CD8-positive, alpha-beta T cell (primary cell): ENCODE measurements at regions of chr16 and their contacts with region 1.

Region 1: DNA sequence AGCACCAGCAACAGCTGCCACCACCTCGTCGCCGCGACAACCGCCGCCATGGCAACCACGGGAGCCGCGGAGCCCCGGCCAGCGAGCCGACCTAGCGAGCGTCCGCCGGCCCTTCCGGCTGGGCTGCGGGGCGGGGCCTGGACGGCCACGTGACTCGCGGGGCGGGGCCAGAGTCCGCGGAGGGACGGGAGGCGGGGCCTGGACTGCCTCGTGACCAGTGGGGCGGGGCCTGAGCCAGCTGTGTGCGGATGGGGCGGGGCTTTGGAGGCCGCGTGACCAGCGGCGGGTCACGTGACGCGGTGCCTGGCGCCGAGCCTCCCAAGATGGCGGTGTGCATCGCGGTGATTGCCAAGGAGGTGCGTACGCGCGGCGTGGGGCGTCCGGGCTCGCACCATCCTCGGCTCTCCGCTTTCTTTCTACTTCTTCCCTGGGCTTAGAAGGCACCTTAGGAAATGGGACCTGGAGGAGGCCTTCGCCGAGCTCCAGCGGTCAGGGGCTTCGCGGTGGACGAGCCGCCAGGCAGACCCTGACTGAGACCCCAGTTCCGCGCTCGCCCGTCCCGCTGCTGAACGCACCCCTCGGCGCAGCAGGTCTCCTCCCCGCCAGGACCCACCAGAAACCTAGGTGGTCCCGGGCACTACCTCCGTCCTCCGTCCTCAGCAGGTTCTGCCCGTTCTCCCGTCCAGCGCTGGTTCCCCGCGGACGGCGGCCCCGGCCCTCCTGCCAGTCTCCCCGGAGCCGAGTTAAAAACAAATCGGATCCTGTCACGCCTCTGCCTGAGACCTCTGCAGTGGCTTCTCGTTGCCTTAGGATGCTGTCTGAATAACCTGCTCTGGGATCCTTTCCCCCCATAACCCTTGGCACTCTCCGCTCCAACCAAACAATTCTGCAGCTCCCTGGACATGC is at the starts of genes GALNS and TRAPPC2L:
- DNase-seq: peak; percentile 97 to 100 (median 99)
- ATAC-seq: peak; percentile 88
- H3K4me3 ChIP-seq: peak within 1 kb of the TSS; percentile 91 to 97
- H3K4me3 Mint-ChIP-seq: peak within 1 kb of the TSS; percentile 98
- H3K27ac ChIP-seq: peak within 1 kb of the TSS; percentile 74 to 83
- H3K27ac Mint-ChIP-seq: peak within 1 kb of the TSS; percentile 92
- H3K4me1 ChIP-seq: peaks cover 33% of the 10 kb centered on the region
- H3K4me1 Mint-ChIP-seq: peaks cover 39% of the 10 kb centered on the region
- H3K27me3 ChIP-seq: no peaks in the 10 kb centered on the region
- H3K27me3 Mint-ChIP-seq: no peaks in the 10 kb centered on the region
- CTCF ChIP-seq: no peak
- total RNA-seq, gene GALNS: 16.0 to 20.0 TPM
- total RNA-seq, gene TRAPPC2L: 53.4 to 56.5 TPM

Region 2: GRCh38 chr16:88569985-88570690 is 286.9 kb before region 1 on chr16 and contains the start of gene ZC3H18:
- CTCF ChIA-PET with region 1: no interaction called
- POLR2A ChIA-PET with region 1: interaction called, 8 read pairs
- intact Hi-C with region 1: loop called in 1 of 2 experiments (anchors 2 kb)
- DNase-seq: peak; percentile 96 to 100 (median 99)
- ATAC-seq: peak; percentile 95
- H3K4me3 ChIP-seq: peak within 1 kb of the TSS; percentile 67 to 76
- H3K4me3 Mint-ChIP-seq: peak within 1 kb of the TSS; percentile 87
- H3K27ac ChIP-seq: peak within 1 kb of the TSS; percentile 55 to 85
- H3K27ac Mint-ChIP-seq: peak within 1 kb of the TSS; percentile 91
- H3K4me1 ChIP-seq: peaks cover 20% of the 10 kb centered on the region
- H3K4me1 Mint-ChIP-seq: peaks cover 34% of the 10 kb centered on the region
- H3K27me3 ChIP-seq: no peaks in the 10 kb centered on the region
- H3K27me3 Mint-ChIP-seq: no peaks in the 10 kb centered on the region
- CTCF ChIP-seq: no peak
- total RNA-seq, gene ZC3H18: 140 to 149 TPM

Region 3: DNA sequence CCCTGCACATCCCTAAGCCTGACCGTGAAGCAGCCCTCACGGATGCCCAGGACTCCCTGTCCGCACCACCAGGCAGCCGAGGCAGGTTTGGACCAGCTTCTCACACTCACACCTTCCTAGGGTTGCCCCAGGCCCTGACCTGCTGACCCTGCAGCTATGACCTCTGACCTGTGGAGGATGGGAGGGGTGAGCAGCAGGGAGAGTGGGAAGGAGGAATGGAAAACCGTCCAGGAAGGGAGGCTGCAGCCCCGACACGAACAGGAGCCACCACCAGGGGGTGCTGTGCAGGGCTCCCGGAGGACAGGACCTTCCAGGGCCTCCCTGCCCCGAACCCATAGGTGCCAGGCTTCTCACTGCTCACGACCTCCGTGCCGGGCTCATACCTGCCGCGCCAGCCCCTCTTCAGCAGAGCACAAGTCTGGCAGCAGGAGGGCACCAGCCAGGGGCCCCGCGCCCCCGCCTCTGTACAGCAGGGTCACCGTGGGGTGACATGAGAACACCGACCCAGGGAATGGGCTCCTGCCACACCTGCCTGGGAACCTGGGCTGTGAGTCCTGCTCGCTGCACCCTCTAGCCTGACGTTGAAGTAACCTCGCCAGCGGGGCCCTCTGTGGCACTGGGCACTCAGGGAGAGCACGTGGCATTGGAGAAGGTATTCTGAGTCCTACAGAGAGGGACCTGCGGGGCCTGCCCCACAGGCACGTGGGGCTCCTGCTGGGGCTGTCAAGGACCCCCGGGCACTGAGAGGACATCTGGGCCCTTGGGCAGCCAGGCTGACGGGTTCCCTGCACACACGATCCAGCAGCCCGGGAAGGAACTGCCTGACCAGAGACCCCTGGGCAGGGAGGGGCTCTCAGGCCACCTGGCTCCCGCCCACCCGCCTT is 113.1 kb before region 1 on chr16:
- CTCF ChIA-PET with region 1: interaction called, 15 read pairs
- POLR2A ChIA-PET with region 1: interaction called, 6 read pairs
- intact Hi-C with region 1: loop called in 1 of 2 experiments (anchors 1 kb)
- DNase-seq: peak; percentile 43 to 88 (median 77)
- ATAC-seq: peak; percentile 64
- H3K4me3 ChIP-seq: no peak overlapping the region
- H3K4me3 Mint-ChIP-seq: no peak overlapping the region
- H3K27ac ChIP-seq: no peak overlapping the region
- H3K27ac Mint-ChIP-seq: no peak overlapping the region
- H3K4me1 ChIP-seq: peaks cover 33% of the 10 kb centered on the region
- H3K4me1 Mint-ChIP-seq: peaks cover 25% of the 10 kb centered on the region
- H3K27me3 ChIP-seq: no peaks in the 10 kb centered on the region
- H3K27me3 Mint-ChIP-seq: no peaks in the 10 kb centered on the region
- CTCF ChIP-seq: peak; percentile 89

Region 4: GRCh38 chr16:88811769-88812512 is 45.1 kb before region 1 on chr16 and contains the start of gene APRT:
- CTCF ChIA-PET with region 1: interaction called, 21 read pairs
- POLR2A ChIA-PET with region 1: interaction called, 35 read pairs
- intact Hi-C with region 1: loop called (anchors 1 kb)
- DNase-seq: peak; percentile 93 to 99 (median 97)
- ATAC-seq: peak; percentile 90
- H3K4me3 ChIP-seq: peak within 1 kb of the TSS; percentile 75 to 99
- H3K4me3 Mint-ChIP-seq: peak within 1 kb of the TSS; percentile 97
- H3K27ac ChIP-seq: peak within 1 kb of the TSS; percentile 71 to 87
- H3K27ac Mint-ChIP-seq: peak within 1 kb of the TSS; percentile 97
- H3K4me1 ChIP-seq: peaks cover 21% of the 10 kb centered on the region
- H3K4me1 Mint-ChIP-seq: peaks cover 19% of the 10 kb centered on the region
- H3K27me3 ChIP-seq: no peaks in the 10 kb centered on the region
- H3K27me3 Mint-ChIP-seq: no peaks in the 10 kb centered on the region
- CTCF ChIP-seq: no peak
- total RNA-seq, gene APRT: 171 to 178 TPM

Region 5: DNA sequence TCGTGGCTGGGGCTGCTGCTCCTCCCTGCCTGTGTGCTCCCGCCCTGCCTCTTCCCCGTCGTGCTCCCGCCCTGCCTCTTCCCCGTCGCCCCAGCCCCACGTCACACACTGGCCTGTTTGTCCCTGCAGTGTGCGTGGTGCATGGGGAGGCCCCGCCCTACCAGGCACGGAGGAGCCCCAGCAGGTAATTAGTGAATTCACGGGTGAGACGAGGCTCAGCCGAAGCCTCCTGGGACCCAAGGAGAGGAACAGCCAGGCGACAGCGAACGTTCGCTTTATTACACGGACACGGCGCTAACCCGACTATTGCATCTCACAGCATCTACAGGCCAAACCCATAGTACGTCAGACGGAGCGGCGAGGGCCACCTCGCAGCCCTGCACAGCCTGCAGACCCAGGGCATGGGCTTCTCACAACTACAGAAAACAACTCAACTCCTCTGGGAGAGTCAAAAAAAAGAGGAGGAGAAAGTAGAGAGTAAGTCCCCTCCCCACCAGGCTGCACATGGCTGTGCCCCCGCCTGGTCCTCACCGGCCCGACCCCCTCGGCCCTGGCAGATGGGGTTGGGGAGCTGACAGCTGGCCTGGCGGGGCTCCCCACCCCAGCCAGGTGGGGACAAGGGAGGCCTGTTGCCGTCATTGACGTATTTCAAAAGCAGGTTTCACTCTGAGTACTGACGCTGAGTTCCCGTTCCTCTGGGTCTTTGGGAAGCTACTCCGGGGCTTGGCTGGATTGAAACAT is 13.7 kb after region 1 on chr16:
- CTCF ChIA-PET with region 1: no interaction called
- POLR2A ChIA-PET with region 1: no interaction called
- intact Hi-C with region 1: no loop called
- DNase-seq: no peak
- ATAC-seq: peak; percentile 49
- H3K4me3 ChIP-seq: no peak overlapping the region
- H3K4me3 Mint-ChIP-seq: peak overlapping the region; percentile 32
- H3K27ac ChIP-seq: no peak overlapping the region
- H3K27ac Mint-ChIP-seq: no peak overlapping the region
- H3K4me1 ChIP-seq: no peaks in the 10 kb centered on the region
- H3K4me1 Mint-ChIP-seq: peaks cover 6% of the 10 kb centered on the region
- H3K27me3 ChIP-seq: peaks cover 6% of the 10 kb centered on the region in 2 experiments
- H3K27me3 Mint-ChIP-seq: peaks cover 8% of the 10 kb centered on the region
- CTCF ChIP-seq: no peak

Region 6: GRCh38 chr16:88896238-88897070 is 39.4 kb after region 1 on chr16:
- CTCF ChIA-PET with region 1: no interaction called
- POLR2A ChIA-PET with region 1: no interaction called
- intact Hi-C with region 1: no loop called
- DNase-seq: no peak
- ATAC-seq: no peak
- H3K4me3 ChIP-seq: no peak overlapping the region
- H3K4me3 Mint-ChIP-seq: no peak overlapping the region
- H3K27ac ChIP-seq: no peak overlapping the region
- H3K27ac Mint-ChIP-seq: no peak overlapping the region
- H3K4me1 ChIP-seq: no peaks in the 10 kb centered on the region
- H3K4me1 Mint-ChIP-seq: no peaks in the 10 kb centered on the region
- H3K27me3 ChIP-seq: no peaks in the 10 kb centered on the region
- H3K27me3 Mint-ChIP-seq: no peaks in the 10 kb centered on the region
- CTCF ChIP-seq: no peak

Region 7: GRCh38 chr16:89193021-89193575 is 336.0 kb after region 1 on chr16:
- CTCF ChIA-PET with region 1: no interaction called
- POLR2A ChIA-PET with region 1: no interaction called
- intact Hi-C with region 1: loop called in 1 of 2 experiments (anchors 2 kb)
- DNase-seq: peak in 3 of 9 experiments; percentile 62 to 76 (median 64)
- ATAC-seq: no peak
- H3K4me3 ChIP-seq: no peak overlapping the region
- H3K4me3 Mint-ChIP-seq: no peak overlapping the region
- H3K27ac ChIP-seq: no peak overlapping the region
- H3K27ac Mint-ChIP-seq: no peak overlapping the region
- H3K4me1 ChIP-seq: no peaks in the 10 kb centered on the region
- H3K4me1 Mint-ChIP-seq: peaks cover 4% of the 10 kb centered on the region
- H3K27me3 ChIP-seq: no peaks in the 10 kb centered on the region
- H3K27me3 Mint-ChIP-seq: no peaks in the 10 kb centered on the region
- CTCF ChIP-seq: no peak

Region 8: DNA sequence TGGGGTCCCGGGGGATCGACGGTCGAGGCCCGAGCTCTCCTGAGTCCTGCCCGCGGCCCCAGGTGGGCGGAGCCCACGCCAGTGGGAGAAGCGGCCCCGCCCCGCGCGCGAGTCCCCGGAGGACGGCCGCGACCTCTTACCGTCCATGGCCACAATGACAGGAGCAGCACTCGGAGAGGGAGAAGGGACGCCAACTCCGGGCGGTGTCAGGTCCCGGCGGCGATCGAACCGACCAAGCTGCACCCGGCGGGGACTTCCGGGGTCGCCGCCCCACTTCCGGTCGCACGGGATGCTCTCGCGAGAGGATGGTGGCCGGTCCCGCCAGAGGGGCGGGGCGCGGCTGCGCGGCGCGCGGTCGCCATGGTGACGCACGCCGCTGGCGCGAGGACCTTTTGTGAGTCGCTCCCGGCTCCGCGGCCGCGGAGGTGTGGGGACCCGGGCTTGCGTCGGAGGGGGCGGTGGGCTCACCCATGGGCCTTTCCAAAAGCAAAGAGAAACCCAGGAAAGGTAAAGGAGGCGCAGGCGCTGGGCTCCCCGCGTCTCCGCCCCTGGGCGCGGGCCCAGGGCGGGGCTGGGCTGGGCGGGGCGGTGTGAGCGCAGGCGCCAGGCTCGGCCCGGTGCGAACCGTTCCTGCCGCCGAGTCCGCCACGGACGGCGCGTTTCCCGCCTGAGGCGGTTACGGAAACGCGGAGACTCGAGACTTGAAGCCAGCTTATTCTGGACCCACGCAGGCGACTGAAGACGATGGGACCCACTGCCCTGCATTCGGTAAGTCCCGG is 800.5 kb after region 1 on chr16 and contains the starts of genes CHMP1A and SPATA33:
- CTCF ChIA-PET with region 1: no interaction called
- POLR2A ChIA-PET with region 1: no interaction called
- intact Hi-C with region 1: loop called in 1 of 2 experiments (anchors 10 kb)
- DNase-seq: peak; percentile 85 to 97 (median 91)
- ATAC-seq: peak; percentile 88
- H3K4me3 ChIP-seq: peak within 1 kb of the TSS; percentile 73 to 91
- H3K4me3 Mint-ChIP-seq: peak within 1 kb of the TSS; percentile 80
- H3K27ac ChIP-seq: peak within 1 kb of the TSS; percentile 81 to 85
- H3K27ac Mint-ChIP-seq: peak within 1 kb of the TSS; percentile 64
- H3K4me1 ChIP-seq: peaks cover 19% of the 10 kb centered on the region
- H3K4me1 Mint-ChIP-seq: peaks cover 29% of the 10 kb centered on the region
- H3K27me3 ChIP-seq: no peaks in the 10 kb centered on the region
- H3K27me3 Mint-ChIP-seq: no peaks in the 10 kb centered on the region
- CTCF ChIP-seq: no peak
- total RNA-seq, gene CHMP1A: 82.9 to 90.8 TPM
- total RNA-seq, gene SPATA33: 4.8 to 5.1 TPM